ENCODE measurements at regions of chr2 and their contacts with region 1.

Region 1: GRCh38 chr2:19863303-19864041 is 38.3 kb downstream of the TTC32 start:
- DNase-seq: peak; percentile 33 to 79
- H3K4me3 ChIP-seq: no peak overlapping the region
- H3K4me1 ChIP-seq: no peaks in the 10 kb centered on the region
- H3K27me3 ChIP-seq: no peaks in the 10 kb centered on the region

Region 2: GRCh38 chr2:18435421-18436037 is 1427.9 kb before region 1 on chr2:
- in situ Hi-C with region 1: loop called (anchors 10 kb)
- DNase-seq: peak; percentile 20 to 55
- H3K4me3 ChIP-seq: no peak overlapping the region
- H3K4me1 ChIP-seq: peaks cover 3% of the 10 kb centered on the region; the same call in 1 of the 2 replicates
- H3K27me3 ChIP-seq: no peaks in the 10 kb centered on the region; the same call in 1 of the 2 replicates

Region 3: GRCh38 chr2:18520451-18521425 is 1342.7 kb before region 1 on chr2:
- in situ Hi-C with region 1: loop called (anchors 25 kb)
- DNase-seq: peak; percentile 71 to 88
- H3K4me3 ChIP-seq: no peak overlapping the region
- H3K4me1 ChIP-seq: no peaks in the 10 kb centered on the region
- H3K27me3 ChIP-seq: no peaks in the 10 kb centered on the region

Region 4: DNA sequence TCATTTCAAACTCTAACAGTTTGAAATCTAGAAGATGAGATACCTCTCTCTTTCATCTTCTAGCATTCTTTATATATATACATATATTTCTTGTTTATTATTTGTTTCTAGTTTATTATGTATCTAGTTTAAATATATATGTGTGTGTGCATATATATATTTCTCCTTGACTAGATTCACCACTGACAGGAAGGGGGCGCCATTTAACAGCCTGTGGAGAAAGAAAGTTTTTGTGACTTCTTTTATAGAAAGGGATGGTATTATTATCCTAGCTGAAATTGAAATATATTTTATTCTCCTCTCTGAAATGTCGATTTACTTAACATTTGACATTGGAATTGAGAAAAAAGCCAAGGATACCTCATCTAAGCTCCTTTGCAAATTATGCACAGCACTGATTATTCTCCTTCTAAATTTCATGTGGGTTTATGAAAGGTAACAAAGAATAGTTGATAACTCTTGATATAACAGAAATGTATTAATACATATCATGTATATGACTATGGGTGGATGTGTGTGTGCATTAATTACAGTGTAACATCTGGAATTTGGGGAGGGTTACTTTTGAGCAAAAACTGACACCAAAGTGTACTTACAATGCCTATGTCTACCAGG is 1113.5 kb before region 1 on chr2:
- in situ Hi-C with region 1: loop called (anchors 25 kb)
- DNase-seq: peak; percentile 45 to 77
- H3K4me3 ChIP-seq: no peak overlapping the region
- H3K4me1 ChIP-seq: no peaks in the 10 kb centered on the region
- H3K27me3 ChIP-seq: no peaks in the 10 kb centered on the region

Region 5: DNA sequence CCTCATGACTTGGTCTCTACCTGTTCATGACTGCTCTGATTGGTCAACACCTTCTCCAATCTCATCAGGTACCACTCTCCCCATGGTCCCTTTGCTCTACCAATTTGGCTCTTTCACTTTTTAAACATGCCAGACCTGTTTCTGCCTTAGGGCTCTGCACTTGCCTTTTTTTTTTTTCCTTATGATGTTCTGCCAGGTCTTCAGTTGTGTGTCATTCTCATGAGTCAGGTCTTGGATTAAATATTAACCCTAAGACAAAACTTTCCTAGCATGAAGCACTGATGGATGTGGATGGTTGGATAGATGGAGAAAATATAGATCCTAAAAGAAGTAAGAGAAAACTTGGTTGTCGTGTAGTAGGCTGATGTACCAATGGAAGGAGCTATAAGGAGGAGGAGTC is 181.0 kb before region 1 on chr2:
- in situ Hi-C with region 1: loop called (anchors 10 kb)
- DNase-seq: no peak
- H3K4me3 ChIP-seq: no peak overlapping the region
- H3K4me1 ChIP-seq: no peaks in the 10 kb centered on the region
- H3K27me3 ChIP-seq: no peaks in the 10 kb centered on the region